ENCODE measurements at regions of chr5 and their contacts with region 1.

Region 1: GRCh38 chr5:149809931-149810617 is 80.0 kb downstream of the PPARGC1B start:
- DNase-seq: no peak
- ATAC-seq: no peak
- H3K4me3 ChIP-seq: no peak overlapping the region
- H3K27ac ChIP-seq: peak overlapping the region; percentile 55
- H3K4me1 ChIP-seq: peaks cover 43% of the 10 kb centered on the region
- H3K27me3 ChIP-seq: no peaks in the 10 kb centered on the region
- CTCF ChIP-seq: no peak
- EP300 ChIP-seq: no peak
- POLR2A ChIP-seq: no peak
- RAD21 ChIP-seq: no peak

Region 2: DNA sequence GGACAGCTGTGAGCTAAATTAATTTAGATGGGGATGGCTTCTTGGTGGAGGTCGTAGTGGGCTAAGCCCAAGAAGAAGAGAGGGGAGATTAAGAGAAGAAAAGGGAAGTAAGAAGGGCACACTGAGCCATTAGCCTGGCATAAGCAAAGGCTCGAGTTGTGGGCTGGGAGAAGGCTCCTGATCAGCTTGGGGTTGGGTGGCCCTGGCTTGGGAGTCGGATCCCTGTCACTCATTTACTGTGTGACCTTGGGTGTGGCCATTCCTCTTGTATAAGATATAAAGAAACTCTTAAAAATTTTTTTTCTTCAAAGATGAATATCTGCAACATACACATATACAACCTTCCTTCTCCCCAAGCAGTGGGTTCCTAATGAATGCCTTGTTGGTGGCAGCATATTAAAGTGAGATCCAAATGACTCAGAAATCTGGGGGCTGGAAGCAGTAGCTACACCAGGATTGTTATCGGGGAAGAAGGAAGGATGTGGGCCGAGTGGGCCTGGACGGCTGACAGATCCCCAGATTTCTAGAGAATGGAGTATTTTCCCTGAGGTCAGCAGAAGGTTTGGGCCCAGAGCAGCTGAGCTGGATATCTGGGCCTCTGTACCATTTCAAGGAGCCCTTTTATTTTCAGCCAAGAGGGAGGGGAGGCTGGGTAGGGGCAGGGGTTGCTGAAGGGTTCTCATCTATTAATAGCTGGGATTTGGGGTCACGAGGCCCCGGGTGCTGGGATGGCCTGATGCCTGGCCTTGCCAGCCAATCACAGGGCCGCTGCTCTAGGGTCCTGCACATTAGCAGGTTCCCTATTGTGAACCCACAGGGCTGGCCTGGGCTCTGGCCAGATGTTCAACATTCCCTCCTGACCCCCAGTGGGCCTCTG is 27.8 kb before region 1 on chr5:
- CTCF ChIA-PET with region 1: interaction called, 67 read pairs
- POLR2A ChIA-PET with region 1: interaction called, 143 read pairs
- RAD21 ChIA-PET with region 1: interaction called, 109 read pairs
- SMC1A ChIA-PET with region 1: interaction called, 329 read pairs
- in situ Hi-C with region 1: no loop called
- intact Hi-C with region 1: no loop called
- DNase-seq: no peak
- ATAC-seq: no peak
- H3K4me3 ChIP-seq: no peak overlapping the region
- H3K27ac ChIP-seq: peak overlapping the region; percentile 13; the same call in 1 of the 2 replicates
- H3K4me1 ChIP-seq: peaks cover 48% of the 10 kb centered on the region
- H3K27me3 ChIP-seq: no peaks in the 10 kb centered on the region
- CTCF ChIP-seq: no peak
- EP300 ChIP-seq: no peak
- POLR2A ChIP-seq: no peak
- RAD21 ChIP-seq: no peak

Region 3: DNA sequence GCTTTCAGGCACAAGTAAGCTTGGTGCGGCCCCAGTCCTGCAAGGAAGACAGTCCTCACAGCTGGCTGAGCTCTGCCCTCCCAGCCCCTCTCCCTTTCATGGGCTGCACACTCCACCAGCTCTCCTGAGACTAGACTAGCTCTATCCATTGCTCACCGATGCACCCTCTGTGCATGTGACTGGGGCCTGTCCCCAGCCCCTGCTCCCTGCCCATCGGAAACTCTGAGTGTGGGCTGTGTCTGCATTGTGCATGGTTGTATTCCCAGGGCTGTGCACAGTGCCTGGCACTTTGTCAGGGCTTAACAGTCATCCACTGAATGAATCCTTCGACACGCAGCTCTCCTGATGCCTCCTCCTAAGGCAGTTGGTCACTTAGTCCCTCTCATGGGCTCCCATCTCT is 12.2 kb after region 1 on chr5:
- CTCF ChIA-PET with region 1: interaction called, 55 read pairs
- POLR2A ChIA-PET with region 1: interaction called, 70 read pairs
- RAD21 ChIA-PET with region 1: interaction called, 139 read pairs
- SMC1A ChIA-PET with region 1: interaction called, 67 read pairs
- in situ Hi-C with region 1: no loop called
- intact Hi-C with region 1: no loop called
- DNase-seq: no peak
- ATAC-seq: no peak
- H3K4me3 ChIP-seq: no peak overlapping the region
- H3K27ac ChIP-seq: no peak overlapping the region
- H3K4me1 ChIP-seq: no peaks in the 10 kb centered on the region
- H3K27me3 ChIP-seq: no peaks in the 10 kb centered on the region
- CTCF ChIP-seq: no peak
- EP300 ChIP-seq: no peak
- POLR2A ChIP-seq: no peak
- RAD21 ChIP-seq: no peak

Region 4: DNA sequence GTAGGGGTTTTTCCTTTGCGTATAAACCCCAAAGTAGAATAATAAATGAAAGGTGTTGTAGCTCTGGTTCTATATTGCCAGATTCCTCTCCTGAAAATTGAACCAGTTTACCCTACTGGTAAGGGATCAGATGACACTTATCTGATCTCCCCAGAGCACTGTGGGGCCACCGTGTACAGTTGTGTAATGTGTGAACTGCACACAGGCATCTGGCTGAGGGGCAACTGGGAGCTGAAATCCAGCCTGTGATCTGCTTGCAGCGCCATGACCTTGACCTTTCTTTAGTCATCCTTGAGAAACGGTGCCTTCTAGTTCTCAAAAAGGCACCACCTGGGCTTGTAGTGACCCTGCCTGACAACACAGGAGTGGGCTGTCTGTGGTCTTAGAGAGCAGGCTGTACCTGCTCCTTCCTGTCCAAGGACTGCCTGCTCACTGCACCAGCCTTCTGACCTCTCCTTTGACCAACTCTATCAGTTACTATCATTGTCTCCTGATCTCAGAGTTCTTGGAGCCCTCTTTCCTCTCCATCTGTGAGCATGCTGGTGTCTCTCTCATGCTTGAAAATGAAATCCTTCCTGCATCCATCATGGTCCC is 94.3 kb after region 1 on chr5:
- CTCF ChIA-PET with region 1: no interaction called
- POLR2A ChIA-PET with region 1: no interaction called
- RAD21 ChIA-PET with region 1: no interaction called
- SMC1A ChIA-PET with region 1: no interaction called
- in situ Hi-C with region 1: no loop called
- intact Hi-C with region 1: no loop called
- DNase-seq: no peak
- ATAC-seq: 0 out of 3 replicates have a peak, but pooled peaks have one; percentile 36
- H3K4me3 ChIP-seq: no peak overlapping the region
- H3K27ac ChIP-seq: no peak overlapping the region
- H3K4me1 ChIP-seq: no peaks in the 10 kb centered on the region
- H3K27me3 ChIP-seq: peaks cover 0 to 3% of the 10 kb centered on the region in 2 experiments; a peak in 1 of 4 replicates
- CTCF ChIP-seq: no peak
- EP300 ChIP-seq: no peak
- POLR2A ChIP-seq: no peak
- RAD21 ChIP-seq: no peak

Measured in GM12878 (cell line).